Activated CD4-positive, alpha-beta memory T cell treated with anti-CD3 and anti-CD28 coated beads, Interleukin-2, amount 10 ng/mL, durations not matched to agents 7 days and 5 days (primary cell): ENCODE measurements at regions of chr4 and their contacts with region 1.

Region 1: GRCh38 chr4:122732329-122733026 is at the start of gene BBS12:
- DNase-seq: peak; percentile 99
- H3K4me3 Mint-ChIP-seq: peak within 1 kb of the TSS; percentile 83
- H3K27ac Mint-ChIP-seq: peak within 1 kb of the TSS; percentile 91
- H3K4me1 Mint-ChIP-seq: peaks cover 23% of the 10 kb centered on the region
- H3K27me3 Mint-ChIP-seq: no peaks in the 10 kb centered on the region
- total RNA-seq, gene BBS12: 3.7 to 5.0 TPM

Region 2: DNA sequence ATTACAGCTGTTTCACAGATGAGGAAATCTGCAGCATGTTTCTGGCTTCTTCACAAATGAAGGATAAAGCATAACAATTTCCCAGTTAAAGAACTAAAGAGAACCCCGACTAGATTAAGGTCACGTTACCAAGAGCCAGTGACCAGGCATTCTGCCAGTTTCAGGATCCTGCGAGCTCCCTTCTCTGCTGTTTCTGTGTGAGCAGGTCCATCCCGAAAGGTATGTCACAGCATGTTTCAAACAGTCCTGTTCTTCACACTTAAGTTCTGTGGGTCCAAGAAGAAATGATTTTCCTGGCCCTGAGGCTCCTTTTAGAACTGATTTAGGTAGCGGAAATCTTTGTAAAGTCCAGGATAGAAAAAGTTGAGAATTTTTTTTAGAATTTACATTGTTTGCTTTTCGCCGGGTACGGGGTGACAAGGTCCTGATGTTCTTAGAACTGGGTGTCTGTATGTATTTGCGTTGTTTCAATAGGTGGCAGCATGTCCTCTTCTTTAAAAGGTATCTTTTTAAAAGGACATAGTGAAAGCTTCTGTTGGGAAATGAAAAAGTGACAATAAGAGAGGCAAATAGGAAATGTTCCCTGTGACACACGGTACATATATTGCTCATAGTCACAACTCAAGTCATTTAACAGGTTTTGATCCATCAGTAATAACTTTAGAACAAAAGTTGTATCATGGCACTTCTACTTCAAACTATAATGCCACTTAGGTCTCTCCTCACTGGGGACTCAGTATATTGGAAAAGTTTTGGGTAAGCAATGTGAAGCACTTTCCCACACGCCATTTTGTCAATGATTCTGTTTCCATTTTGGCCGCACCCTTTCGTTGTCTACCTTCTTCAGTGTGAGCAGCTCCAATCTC is 130.0 kb before region 1 on chr4:
- CTCF ChIA-PET with region 1: interaction called, 14 read pairs
- POLR2A ChIA-PET with region 1: no interaction called
- DNase-seq: no peak
- H3K4me3 Mint-ChIP-seq: no peak overlapping the region
- H3K27ac Mint-ChIP-seq: no peak overlapping the region
- H3K4me1 Mint-ChIP-seq: peaks cover 13% of the 10 kb centered on the region
- H3K27me3 Mint-ChIP-seq: peaks cover 7% of the 10 kb centered on the region

Region 3: GRCh38 chr4:122722256-122722655 is 10.2 kb before region 1 on chr4:
- CTCF ChIA-PET with region 1: interaction called, 26 read pairs
- POLR2A ChIA-PET with region 1: interaction called, 7 read pairs
- DNase-seq: no peak
- H3K4me3 Mint-ChIP-seq: no peak overlapping the region
- H3K27ac Mint-ChIP-seq: no peak overlapping the region
- H3K4me1 Mint-ChIP-seq: no peaks in the 10 kb centered on the region
- H3K27me3 Mint-ChIP-seq: peaks cover 11% of the 10 kb centered on the region

Region 4: GRCh38 chr4:122758033-122758432 is 25.6 kb after region 1 on chr4:
- CTCF ChIA-PET with region 1: interaction called, 18 read pairs
- POLR2A ChIA-PET with region 1: interaction called, 4 read pairs
- DNase-seq: no peak
- H3K4me3 Mint-ChIP-seq: no peak overlapping the region
- H3K27ac Mint-ChIP-seq: no peak overlapping the region
- H3K4me1 Mint-ChIP-seq: peaks cover 27% of the 10 kb centered on the region
- H3K27me3 Mint-ChIP-seq: peaks cover 27% of the 10 kb centered on the region

Region 5: DNA sequence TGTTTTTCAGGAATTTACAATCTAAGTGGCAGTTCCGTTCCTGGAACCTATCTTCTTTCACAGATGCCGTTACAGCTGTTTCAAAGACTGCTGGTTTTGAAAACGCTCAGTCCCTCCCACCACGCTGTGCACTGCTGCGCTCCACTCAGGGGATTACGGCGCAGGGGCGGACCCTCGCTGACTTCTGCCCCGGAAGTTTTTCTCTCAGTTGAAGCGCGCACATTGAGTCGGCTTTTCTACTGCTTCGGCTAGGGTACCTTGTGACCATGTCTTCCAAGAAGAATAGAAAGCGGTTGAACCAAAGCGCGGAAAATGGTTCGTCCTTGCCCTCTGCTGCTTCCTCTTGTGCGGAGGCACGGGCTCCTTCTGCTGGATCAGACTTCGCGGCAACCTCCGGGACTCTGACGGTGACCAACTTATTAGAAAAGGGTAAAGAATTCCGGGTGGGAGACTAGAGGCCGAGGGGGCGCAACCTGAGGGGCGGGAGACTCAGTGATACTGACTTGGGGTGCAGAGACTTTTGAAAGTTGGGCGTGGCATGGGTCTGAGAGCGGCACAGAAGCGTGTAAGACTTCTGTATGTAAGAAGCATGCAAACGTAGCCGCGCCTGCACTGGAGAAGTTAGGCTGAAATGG is 190.5 kb after region 1 on chr4:
- CTCF ChIA-PET with region 1: interaction called, 26 read pairs
- POLR2A ChIA-PET with region 1: interaction called, 18 read pairs
- DNase-seq: peak; percentile 94
- H3K4me3 Mint-ChIP-seq: no peak overlapping the region
- H3K27ac Mint-ChIP-seq: no peak overlapping the region
- H3K4me1 Mint-ChIP-seq: peaks cover 27% of the 10 kb centered on the region
- H3K27me3 Mint-ChIP-seq: no peaks in the 10 kb centered on the region